HEK293 (cell line): ENCODE measurements at regions of chr5 and their contacts with region 1.

Region 1: GRCh38 chr5:137075163-137075970 is 423.8 kb downstream of the SPOCK1 start:
- H3K4me3 ChIP-seq: no peak overlapping the region
- H3K27ac ChIP-seq: no peak overlapping the region
- H3K4me1 ChIP-seq: peaks cover 8% of the 10 kb centered on the region
- CTCF ChIP-seq: peak; percentile 41; the same call in 1 of the 2 replicates

Region 2: GRCh38 chr5:137061382-137061781 is 14.0 kb before region 1 on chr5:
- CTCF ChIA-PET with region 1: interaction called, 11 read pairs
- POLR2A ChIA-PET with region 1: no interaction called
- H3K4me3 ChIP-seq: no peak overlapping the region
- H3K27ac ChIP-seq: no peak overlapping the region
- H3K4me1 ChIP-seq: no peaks in the 10 kb centered on the region
- CTCF ChIP-seq: no peak

Region 3: DNA sequence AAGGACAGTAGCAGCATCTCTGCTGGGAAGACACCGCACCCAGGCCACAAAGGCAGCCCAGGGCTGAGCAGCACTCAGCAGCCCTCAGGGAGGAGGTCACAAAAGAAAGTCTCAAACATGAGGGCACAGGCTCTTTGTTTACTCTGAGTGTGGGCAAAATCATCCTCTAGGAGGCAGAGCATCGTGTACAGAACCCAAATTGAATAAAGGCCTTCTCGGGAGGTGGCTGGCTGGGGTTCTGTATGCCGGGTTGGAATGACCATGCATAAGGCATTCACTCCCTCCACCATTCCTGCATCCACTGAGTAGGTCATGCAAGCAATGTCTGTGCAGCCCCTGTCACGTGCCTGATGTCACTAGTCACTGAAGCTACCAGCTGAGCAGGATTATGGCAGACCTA is 11.0 kb after region 1 on chr5:
- CTCF ChIA-PET with region 1: interaction called, 29 read pairs
- POLR2A ChIA-PET with region 1: no interaction called
- H3K4me3 ChIP-seq: no peak overlapping the region
- H3K27ac ChIP-seq: no peak overlapping the region
- H3K4me1 ChIP-seq: peaks cover 6% of the 10 kb centered on the region; the same call in 1 of the 2 replicates
- CTCF ChIP-seq: no peak